HCT116 (cell line): ENCODE measurements at regions of chr7 and their contacts with region 1.

Region 1: DNA sequence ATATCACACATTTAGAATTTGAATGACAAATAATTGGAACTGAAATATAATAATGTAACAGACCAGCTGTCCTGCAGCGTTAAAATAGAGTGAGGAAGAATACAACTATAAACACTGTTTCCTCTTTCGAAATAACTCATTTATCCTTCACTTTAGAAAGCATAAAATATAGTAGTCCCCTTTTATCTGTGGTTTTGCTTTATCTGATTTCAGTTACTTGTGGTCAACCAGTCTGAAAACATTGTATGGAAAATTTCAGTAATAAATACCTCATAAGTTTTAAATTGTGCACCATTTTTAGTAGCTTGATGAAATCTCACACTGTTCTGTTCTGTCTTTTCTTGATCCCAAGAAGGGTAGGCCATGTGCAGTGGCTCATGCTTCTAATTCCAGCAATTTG is 31.7 kb downstream of the POLR1F start:
- DNase-seq: no peak
- ATAC-seq: no peak
- H3K4me3 ChIP-seq: no peak overlapping the region
- H3K27ac ChIP-seq: no peak overlapping the region
- H3K4me1 ChIP-seq: no peaks in the 10 kb centered on the region
- H3K27me3 ChIP-seq: no peaks in the 10 kb centered on the region
- CTCF ChIP-seq: no peak
- POLR2A ChIP-seq: no peak
- RAD21 ChIP-seq: no peak

Region 2: DNA sequence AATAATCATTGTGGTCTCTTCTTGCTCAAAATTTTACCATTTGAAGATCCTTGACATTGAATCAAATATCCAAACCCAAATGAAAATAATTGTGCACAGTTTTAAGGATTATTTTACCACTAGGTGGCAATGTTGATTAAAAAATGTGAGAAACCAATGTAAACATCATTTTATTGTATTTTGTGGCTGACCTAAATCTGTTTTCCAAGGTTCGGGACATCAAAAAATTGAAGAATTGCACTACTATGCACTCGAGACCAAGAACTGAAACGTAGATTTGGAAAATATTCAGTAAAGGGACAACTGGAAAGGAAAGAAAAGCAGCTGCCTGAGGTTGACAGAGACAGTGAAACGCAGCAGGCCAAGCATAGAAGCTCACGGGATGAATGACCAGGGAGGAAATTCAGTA is 1996.2 kb before region 1 on chr7:
- CTCF ChIA-PET with region 1: no interaction called
- POLR2A ChIA-PET with region 1: no interaction called
- RAD21 ChIA-PET with region 1: no interaction called
- intact Hi-C with region 1: loop called (anchors 10 kb)
- DNase-seq: peak; percentile 12
- ATAC-seq: no peak
- H3K4me3 ChIP-seq: no peak overlapping the region
- H3K27ac ChIP-seq: no peak overlapping the region
- H3K4me1 ChIP-seq: no peaks in the 10 kb centered on the region
- H3K27me3 ChIP-seq: no peaks in the 10 kb centered on the region
- CTCF ChIP-seq: peak; percentile 2 to 66 (median 54); a peak in 3 of 6 replicates
- POLR2A ChIP-seq: no peak
- RAD21 ChIP-seq: peak; percentile 72

Region 3: DNA sequence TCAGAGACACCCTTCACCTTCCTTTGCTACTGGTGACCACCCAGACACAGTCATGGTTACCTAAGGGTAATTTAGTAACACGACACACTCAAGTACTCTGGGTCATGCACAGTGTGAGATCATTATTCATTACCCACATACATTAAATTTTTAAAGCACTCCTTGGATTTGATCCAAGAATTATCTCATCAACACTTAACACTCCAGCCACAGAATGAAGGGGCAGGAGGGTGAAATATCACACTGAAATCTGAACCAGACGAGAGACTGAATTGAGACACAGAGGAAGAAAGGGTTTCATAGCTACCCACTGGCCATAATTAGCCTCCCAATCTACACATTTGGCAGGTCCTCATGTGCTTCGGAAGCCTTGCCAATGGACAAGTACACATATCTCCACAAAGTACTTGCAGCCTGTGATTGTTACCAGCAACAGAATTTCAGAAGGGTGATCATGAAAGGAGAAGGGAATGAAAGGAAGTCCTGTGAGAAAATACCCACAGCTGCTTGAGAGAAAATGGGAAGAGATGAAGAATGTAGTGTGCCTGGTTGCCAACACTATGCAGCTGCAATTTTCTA is 157.6 kb before region 1 on chr7:
- CTCF ChIA-PET with region 1: no interaction called
- POLR2A ChIA-PET with region 1: no interaction called
- RAD21 ChIA-PET with region 1: no interaction called
- intact Hi-C with region 1: no loop called
- DNase-seq: no peak
- ATAC-seq: no peak
- H3K4me3 ChIP-seq: no peak overlapping the region
- H3K27ac ChIP-seq: no peak overlapping the region
- H3K4me1 ChIP-seq: no peaks in the 10 kb centered on the region
- H3K27me3 ChIP-seq: no peaks in the 10 kb centered on the region
- CTCF ChIP-seq: no peak
- POLR2A ChIP-seq: no peak
- RAD21 ChIP-seq: no peak